ENCODE measurements at regions of chr18 and their contacts with region 1.

Region 1: DNA sequence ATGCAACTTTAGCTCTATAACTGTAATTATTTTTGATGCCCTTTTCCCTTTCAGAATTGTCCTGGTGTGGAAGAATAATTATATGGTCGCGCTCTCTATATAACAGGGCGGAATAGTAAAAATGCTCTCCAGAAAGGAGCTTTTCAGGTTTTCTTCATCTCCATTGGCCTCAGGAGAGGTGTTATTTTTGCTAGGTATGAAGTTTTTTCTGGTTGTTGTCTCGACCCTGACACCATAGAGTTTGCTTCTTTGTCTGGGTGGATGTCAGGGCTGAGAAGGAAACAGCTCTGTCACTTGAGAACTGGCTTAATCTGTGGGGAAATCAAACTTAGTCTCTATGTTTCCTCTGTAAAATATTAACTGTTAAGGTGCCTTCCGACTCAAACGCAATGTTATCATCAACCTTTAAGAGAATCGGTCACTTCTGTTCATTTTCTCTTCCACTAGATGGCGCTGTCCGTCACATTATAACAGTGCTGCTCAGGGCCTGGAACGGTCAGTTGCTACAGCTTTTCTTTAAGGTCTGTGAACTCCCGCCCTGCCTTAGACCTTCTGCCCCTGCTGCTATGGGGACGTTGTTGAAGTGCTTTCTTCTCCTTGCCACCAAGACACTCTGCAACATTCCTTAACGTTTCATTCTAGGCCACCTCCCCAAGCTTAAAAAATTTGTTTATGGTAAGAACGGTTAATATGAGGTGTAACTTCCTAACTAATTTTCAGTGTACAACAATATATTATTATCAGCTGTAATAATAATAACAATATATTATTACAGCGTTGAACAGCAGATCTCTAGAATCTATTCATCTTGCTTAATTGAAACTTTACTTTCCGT is 23.8 kb upstream of the SERPINB12 start:
- DNase-seq: peak in 1 of 3 donors; percentile 52
- ATAC-seq: peak; percentile 87 to 92 (median 90)
- H3K4me3 ChIP-seq: no peak overlapping the region
- H3K27ac ChIP-seq: no peak overlapping the region
- H3K4me1 ChIP-seq: no peaks in the 10 kb centered on the region
- H3K27me3 ChIP-seq: no peaks in the 10 kb centered on the region
- CTCF ChIP-seq: peak; percentile 70 to 87 (median 75)
- POLR2A ChIP-seq: no peak

Region 2: GRCh38 chr18:63339920-63340484 is 178.4 kb before region 1 on chr18:
- intact Hi-C with region 1: no loop called
- DNase-seq: no peak
- ATAC-seq: no peak
- H3K4me3 ChIP-seq: no peak overlapping the region
- H3K27ac ChIP-seq: no peak overlapping the region
- H3K4me1 ChIP-seq: peaks cover 0 to 16% (median 7%) of the 10 kb centered on the region in 4 donors
- H3K27me3 ChIP-seq: no peaks in the 10 kb centered on the region
- CTCF ChIP-seq: peak; percentile 28 to 54 (median 48)
- POLR2A ChIP-seq: no peak

Region 3: DNA sequence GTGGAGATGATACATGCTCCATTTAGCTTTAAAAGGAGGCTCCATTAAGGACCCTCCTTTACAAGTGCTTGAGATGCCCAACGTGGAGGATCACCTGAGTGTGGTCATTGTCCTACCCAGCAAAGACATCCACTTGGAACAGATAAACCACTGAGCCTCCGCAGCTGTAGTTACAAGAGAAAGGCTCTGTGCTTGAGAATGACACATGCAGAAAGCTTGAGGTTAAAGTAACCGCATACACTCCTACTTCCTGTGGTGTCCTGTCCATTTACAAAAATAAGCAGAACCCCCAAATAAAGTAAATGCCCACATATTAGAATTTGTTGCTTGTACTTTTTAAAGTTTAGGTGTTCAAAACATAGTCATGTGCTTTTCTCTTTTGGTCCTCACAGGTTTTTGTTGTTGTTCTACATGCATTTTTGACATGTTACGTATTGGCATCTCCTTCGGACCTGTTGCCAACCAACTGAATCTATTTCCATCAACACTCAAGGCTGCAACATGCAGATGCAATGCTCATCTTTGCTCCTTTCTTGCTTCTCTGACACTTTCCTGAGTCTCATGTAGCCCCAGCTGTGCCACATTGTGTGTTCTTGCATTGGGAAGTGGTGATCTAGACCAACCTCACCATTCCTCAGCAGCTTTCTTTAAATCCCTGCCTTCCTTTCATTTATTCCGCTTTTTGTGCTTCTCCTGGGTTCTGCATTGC is 312.8 kb after region 1 on chr18:
- intact Hi-C with region 1: loop called in 1 of 2 experiments (anchors 10 kb)
- DNase-seq: no peak
- ATAC-seq: no peak
- H3K4me3 ChIP-seq: no peak overlapping the region
- H3K27ac ChIP-seq: no peak overlapping the region
- H3K4me1 ChIP-seq: no peaks in the 10 kb centered on the region
- H3K27me3 ChIP-seq: no peaks in the 10 kb centered on the region
- CTCF ChIP-seq: no peak
- POLR2A ChIP-seq: no peak

Region 4: DNA sequence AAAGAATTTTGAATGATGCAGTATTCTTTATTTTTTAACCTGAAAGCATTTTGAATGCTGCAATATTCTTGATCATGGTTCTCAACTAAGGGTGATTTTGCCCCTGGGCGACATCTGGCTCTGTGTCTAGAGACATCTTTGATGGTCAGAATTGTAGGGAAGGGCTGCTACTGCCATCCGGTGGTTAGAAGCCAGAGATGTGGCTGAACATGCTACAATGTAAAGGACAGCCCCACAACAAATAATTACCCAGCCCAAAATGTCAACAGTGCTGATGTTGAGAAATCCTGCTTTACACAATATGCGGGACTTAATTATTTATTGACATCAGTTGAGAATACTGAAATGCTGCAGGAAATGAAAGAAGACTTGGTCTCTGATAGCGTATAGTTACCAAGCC is 331.6 kb after region 1 on chr18:
- intact Hi-C with region 1: loop called in 1 of 2 experiments (anchors 10 kb)
- DNase-seq: no peak
- ATAC-seq: peak; percentile 93 to 99 (median 96)
- H3K4me3 ChIP-seq: no peak overlapping the region
- H3K27ac ChIP-seq: no peak overlapping the region
- H3K4me1 ChIP-seq: no peaks in the 10 kb centered on the region
- H3K27me3 ChIP-seq: no peaks in the 10 kb centered on the region
- CTCF ChIP-seq: peak; percentile 25 to 47 (median 42)
- POLR2A ChIP-seq: no peak

Measured in right lobe of liver (tissue), 6 donors.